Activated CD8-positive, alpha-beta memory T cell treated with anti-CD3 and anti-CD28 coated beads, Interleukin-2, amount 10 ng/mL, durations not matched to agents 7 days and 5 days (primary cell): ENCODE measurements at regions of chr10 and their contacts with region 1.

Region 1: DNA sequence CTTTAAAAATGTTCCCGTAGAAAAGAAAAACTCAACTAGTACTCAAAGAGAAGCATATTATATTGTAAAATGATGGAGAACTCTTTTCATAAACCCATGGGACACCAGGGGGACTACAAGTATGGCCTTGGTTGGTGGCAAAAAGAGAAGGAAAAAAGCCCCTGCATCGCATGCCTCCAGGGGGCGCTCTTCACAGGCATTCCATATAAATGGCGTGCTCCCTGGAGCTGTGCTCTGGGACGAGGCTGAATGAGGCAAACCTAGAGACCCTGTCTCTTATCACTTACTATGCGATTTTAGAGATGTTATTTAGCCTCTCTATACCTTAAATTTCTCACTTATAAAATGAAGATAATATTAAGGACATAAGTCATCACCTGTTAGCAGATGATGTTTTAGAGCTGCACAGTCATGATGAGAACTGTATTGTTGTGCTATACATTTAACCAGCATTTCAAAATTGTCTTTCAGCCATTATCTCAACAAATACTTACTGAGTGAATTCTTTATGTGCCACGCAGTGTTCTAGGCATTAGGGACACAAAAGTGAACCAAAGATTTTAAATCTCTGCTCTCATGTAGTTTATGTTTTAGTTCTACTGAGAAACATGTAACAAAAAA is 105.8 kb downstream of the ARHGAP21 start:
- DNase-seq: peak; percentile 50
- ATAC-seq: no peak
- H3K4me3 Mint-ChIP-seq: no peak overlapping the region
- H3K27ac Mint-ChIP-seq: no peak overlapping the region
- H3K4me1 Mint-ChIP-seq: peaks cover 11% of the 10 kb centered on the region
- H3K27me3 Mint-ChIP-seq: no peaks in the 10 kb centered on the region

Region 2: GRCh38 chr10:24603333-24603732 is 14.5 kb before region 1 on chr10:
- CTCF ChIA-PET with region 1: interaction called, 11 read pairs
- DNase-seq: no peak
- ATAC-seq: peak; percentile 66
- H3K4me3 Mint-ChIP-seq: no peak overlapping the region
- H3K27ac Mint-ChIP-seq: peak overlapping the region; percentile 70
- H3K4me1 Mint-ChIP-seq: peaks cover 19% of the 10 kb centered on the region
- H3K27me3 Mint-ChIP-seq: no peaks in the 10 kb centered on the region

Region 3: GRCh38 chr10:24639124-24639523 is 21.2 kb after region 1 on chr10:
- CTCF ChIA-PET with region 1: interaction called, 10 read pairs
- DNase-seq: no peak
- ATAC-seq: no peak
- H3K4me3 Mint-ChIP-seq: no peak overlapping the region
- H3K27ac Mint-ChIP-seq: no peak overlapping the region
- H3K4me1 Mint-ChIP-seq: no peaks in the 10 kb centered on the region
- H3K27me3 Mint-ChIP-seq: no peaks in the 10 kb centered on the region

Region 4: GRCh38 chr10:25080880-25081581 is 463.1 kb after region 1 on chr10:
- CTCF ChIA-PET with region 1: interaction called, 11 read pairs
- DNase-seq: peak; percentile 71
- ATAC-seq: peak; percentile 76
- H3K4me3 Mint-ChIP-seq: no peak overlapping the region
- H3K27ac Mint-ChIP-seq: no peak overlapping the region
- H3K4me1 Mint-ChIP-seq: peaks cover 9% of the 10 kb centered on the region
- H3K27me3 Mint-ChIP-seq: peaks cover 25% of the 10 kb centered on the region